Endothelial cell of umbilical vein (primary cell): ENCODE measurements at regions of chr12 and their contacts with region 1.

Region 1: GRCh38 chr12:47779301-47779942 is 6.4 kb downstream of the SLC48A1 start:
- DNase-seq: peak; percentile 88
- H3K4me3 ChIP-seq: no peak overlapping the region
- H3K27ac ChIP-seq: no peak overlapping the region
- H3K4me1 ChIP-seq: peaks cover 32% of the 10 kb centered on the region
- H3K27me3 ChIP-seq: no peaks in the 10 kb centered on the region
- CTCF ChIP-seq: peak; percentile 89 to 96
- POLR2A ChIP-seq: no peak

Region 2: GRCh38 chr12:47742253-47742825 is 37.1 kb before region 1 on chr12:
- CTCF ChIA-PET with region 1: interaction called, 133 read pairs
- POLR2A ChIA-PET with region 1: no interaction called
- dilution Hi-C with region 1: no loop called
- intact Hi-C with region 1: loop called (anchors 1 kb)
- DNase-seq: peak; percentile 51
- H3K4me3 ChIP-seq: no peak overlapping the region
- H3K27ac ChIP-seq: no peak overlapping the region
- H3K4me1 ChIP-seq: peaks cover 11% of the 10 kb centered on the region
- H3K27me3 ChIP-seq: no peaks in the 10 kb centered on the region
- CTCF ChIP-seq: peak; percentile 89 to 94
- POLR2A ChIP-seq: no peak

Region 3: GRCh38 chr12:47767216-47767724 is 12.2 kb before region 1 on chr12:
- CTCF ChIA-PET with region 1: interaction called, 41 read pairs
- POLR2A ChIA-PET with region 1: no interaction called
- dilution Hi-C with region 1: no loop called
- intact Hi-C with region 1: no loop called
- DNase-seq: peak; percentile 66
- H3K4me3 ChIP-seq: no peak overlapping the region
- H3K27ac ChIP-seq: no peak overlapping the region
- H3K4me1 ChIP-seq: peaks cover 6% of the 10 kb centered on the region
- H3K27me3 ChIP-seq: no peaks in the 10 kb centered on the region
- CTCF ChIP-seq: peak; percentile 64 to 66
- POLR2A ChIP-seq: no peak

Region 4: DNA sequence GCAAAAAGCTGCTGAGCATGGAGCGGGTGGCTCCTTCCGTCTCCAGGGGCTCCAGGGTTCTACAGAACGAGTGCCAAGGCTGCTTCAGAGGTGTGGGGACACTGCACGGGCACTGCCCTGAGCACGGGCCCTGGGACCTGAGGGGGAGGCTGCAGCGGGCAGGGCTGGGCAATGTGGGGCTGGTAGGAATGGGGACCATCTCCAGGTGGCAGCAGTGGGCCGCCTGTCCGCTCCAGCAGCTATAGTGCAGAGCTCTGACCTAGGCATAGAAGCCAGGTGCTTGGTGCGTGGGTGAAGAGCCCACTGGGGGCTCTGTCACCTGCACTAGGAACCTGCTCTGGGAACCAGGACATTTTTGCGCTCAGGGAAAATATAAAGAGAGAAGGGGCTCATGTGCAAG is 18.0 kb after region 1 on chr12:
- CTCF ChIA-PET with region 1: interaction called, 10 read pairs
- POLR2A ChIA-PET with region 1: interaction called, 3 read pairs
- dilution Hi-C with region 1: no loop called
- intact Hi-C with region 1: no loop called
- DNase-seq: no peak
- H3K4me3 ChIP-seq: no peak overlapping the region
- H3K27ac ChIP-seq: no peak overlapping the region
- H3K4me1 ChIP-seq: peaks cover 23% of the 10 kb centered on the region
- H3K27me3 ChIP-seq: no peaks in the 10 kb centered on the region
- CTCF ChIP-seq: peak; percentile 6 to 45
- POLR2A ChIP-seq: no peak

Region 5: GRCh38 chr12:47819896-47820630 is 40.6 kb after region 1 on chr12 and contains the start of gene HDAC7:
- CTCF ChIA-PET with region 1: interaction called, 5 read pairs
- POLR2A ChIA-PET with region 1: no interaction called
- dilution Hi-C with region 1: no loop called
- intact Hi-C with region 1: loop called (anchors 5 kb)
- DNase-seq: peak; percentile 90
- H3K4me3 ChIP-seq: peak within 1 kb of the TSS; percentile 79 to 85 (median 84)
- H3K27ac ChIP-seq: peak within 1 kb of the TSS; percentile 93
- H3K4me1 ChIP-seq: peaks cover 50% of the 10 kb centered on the region
- H3K27me3 ChIP-seq: no peaks in the 10 kb centered on the region
- CTCF ChIP-seq: no peak
- POLR2A ChIP-seq: peak; percentile 88
- total RNA-seq, gene HDAC7: 249 and 252 TPM in 2 replicates